SK-N-SH (cell line): ENCODE measurements at regions of chr15 and their contacts with region 1.

Region 1: DNA sequence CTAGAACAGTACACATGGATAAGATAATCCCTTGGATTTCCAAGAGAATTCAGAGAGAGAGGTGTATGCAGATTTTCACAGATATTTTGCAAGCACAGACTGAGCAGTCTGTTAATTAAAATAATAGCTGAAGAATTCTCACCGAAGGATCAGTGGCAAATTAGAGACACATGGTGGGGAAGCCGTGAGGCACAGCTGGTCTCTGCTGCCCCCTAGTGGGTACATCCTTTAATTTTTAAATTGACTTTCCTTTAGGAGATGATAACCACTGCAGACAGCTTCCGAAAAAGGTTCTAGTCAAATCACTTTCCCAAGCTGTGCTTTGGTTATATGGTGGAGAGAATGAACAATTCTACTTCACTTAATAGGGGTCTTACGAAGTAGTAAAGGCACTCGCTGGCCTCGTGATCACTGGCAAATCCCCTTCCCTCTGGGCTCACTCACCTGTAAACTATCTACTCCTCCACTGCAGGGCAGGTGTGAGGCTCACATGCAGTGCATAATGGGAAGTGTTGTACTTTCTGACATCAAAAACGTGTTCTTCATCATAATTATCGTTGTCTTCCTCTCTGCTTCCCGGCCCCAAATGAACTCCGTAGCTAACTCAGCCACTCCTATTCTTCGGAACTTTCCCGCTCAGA is 19.5 kb downstream of the MESD start:
- DNase-seq: peak; percentile 70
- H3K4me3 ChIP-seq: no peak overlapping the region; a peak in 1 of 4 replicates
- H3K27ac ChIP-seq: no peak overlapping the region
- H3K4me1 ChIP-seq: peaks cover 0 to 7% of the 10 kb centered on the region in 2 experiments; a peak in 1 of 4 replicates
- H3K27me3 ChIP-seq: no peaks in the 10 kb centered on the region
- CTCF ChIP-seq: peak; percentile 87
- EP300 ChIP-seq: no peak
- RAD21 ChIP-seq: peak; percentile 95

Region 2: GRCh38 chr15:80455668-80456442 is 514.3 kb before region 1 on chr15:
- CTCF ChIA-PET with region 1: interaction called, 45 read pairs
- POLR2A ChIA-PET with region 1: no interaction called
- DNase-seq: peak; percentile 75
- H3K4me3 ChIP-seq: peak overlapping the region in 1 of 2 experiments; percentile 20; a peak in 1 of 4 replicates
- H3K27ac ChIP-seq: peak overlapping the region; percentile 49 to 69; a peak in 3 of 4 replicates
- H3K4me1 ChIP-seq: peaks cover 13 to 16% of the 10 kb centered on the region in 2 experiments; a peak in 3 of 4 replicates
- H3K27me3 ChIP-seq: no peaks in the 10 kb centered on the region
- CTCF ChIP-seq: peak; percentile 98
- EP300 ChIP-seq: peak; percentile 66 to 94
- RAD21 ChIP-seq: peak; percentile 96

Region 3: GRCh38 chr15:80783260-80783659 is 186.9 kb before region 1 on chr15:
- CTCF ChIA-PET with region 1: interaction called, 139 read pairs
- POLR2A ChIA-PET with region 1: no interaction called
- DNase-seq: no peak
- H3K4me3 ChIP-seq: no peak overlapping the region
- H3K27ac ChIP-seq: no peak overlapping the region
- H3K4me1 ChIP-seq: peaks cover 0 to 19% of the 10 kb centered on the region in 2 experiments; a peak in 1 of 4 replicates
- H3K27me3 ChIP-seq: no peaks in the 10 kb centered on the region
- CTCF ChIP-seq: no peak
- EP300 ChIP-seq: no peak
- RAD21 ChIP-seq: no peak

Region 4: GRCh38 chr15:80789296-80789695 is 180.8 kb before region 1 on chr15:
- CTCF ChIA-PET with region 1: interaction called, 13 read pairs
- POLR2A ChIA-PET with region 1: no interaction called
- DNase-seq: no peak
- H3K4me3 ChIP-seq: no peak overlapping the region
- H3K27ac ChIP-seq: no peak overlapping the region
- H3K4me1 ChIP-seq: no peaks in the 10 kb centered on the region; a peak in 1 of 4 replicates
- H3K27me3 ChIP-seq: no peaks in the 10 kb centered on the region
- CTCF ChIP-seq: no peak
- EP300 ChIP-seq: no peak
- RAD21 ChIP-seq: no peak

Region 5: DNA sequence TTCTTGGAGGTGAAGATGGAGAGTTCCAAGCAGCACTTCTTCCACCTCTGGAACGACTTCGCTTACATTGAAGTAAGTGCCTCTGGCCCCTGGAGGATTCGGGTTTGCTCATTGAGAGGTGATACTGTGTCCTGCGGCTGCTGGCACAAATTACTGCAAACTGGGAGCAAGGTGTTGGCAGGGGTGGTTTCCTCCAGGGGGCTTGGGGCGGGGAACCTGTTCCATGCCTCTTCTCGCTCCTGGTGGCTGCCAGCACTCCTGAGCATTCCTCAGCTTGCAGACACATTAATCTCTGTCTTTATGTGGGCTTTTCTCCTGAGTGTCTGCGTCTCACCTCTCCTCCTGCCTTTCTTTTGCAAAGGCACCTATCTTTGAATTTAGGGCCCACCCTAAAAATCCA is 27.9 kb before region 1 on chr15:
- CTCF ChIA-PET with region 1: interaction called, 11 read pairs
- POLR2A ChIA-PET with region 1: no interaction called
- DNase-seq: no peak
- H3K4me3 ChIP-seq: no peak overlapping the region
- H3K27ac ChIP-seq: no peak overlapping the region
- H3K4me1 ChIP-seq: no peaks in the 10 kb centered on the region; a peak in 1 of 4 replicates
- H3K27me3 ChIP-seq: no peaks in the 10 kb centered on the region
- CTCF ChIP-seq: no peak
- EP300 ChIP-seq: no peak
- RAD21 ChIP-seq: no peak

Region 6: GRCh38 chr15:80953936-80954778 is 16.0 kb before region 1 on chr15:
- CTCF ChIA-PET with region 1: interaction called, 15 read pairs
- POLR2A ChIA-PET with region 1: no interaction called
- DNase-seq: no peak
- H3K4me3 ChIP-seq: no peak overlapping the region
- H3K27ac ChIP-seq: no peak overlapping the region
- H3K4me1 ChIP-seq: peaks cover 0 to 6% of the 10 kb centered on the region in 2 experiments; a peak in 2 of 4 replicates
- H3K27me3 ChIP-seq: no peaks in the 10 kb centered on the region
- CTCF ChIP-seq: no peak
- EP300 ChIP-seq: no peak
- RAD21 ChIP-seq: no peak

Region 7: GRCh38 chr15:80989518-80990478 is 19.7 kb after region 1 on chr15 and contains the start of gene MESD:
- CTCF ChIA-PET with region 1: interaction called, 52 read pairs
- POLR2A ChIA-PET with region 1: no interaction called
- DNase-seq: peak; percentile 99
- H3K4me3 ChIP-seq: peak within 1 kb of the TSS; percentile 61 to 96
- H3K27ac ChIP-seq: peak within 1 kb of the TSS; percentile 75 to 77
- H3K4me1 ChIP-seq: peaks cover 0 to 12% of the 10 kb centered on the region in 2 experiments; a peak in 2 of 4 replicates
- H3K27me3 ChIP-seq: no peaks in the 10 kb centered on the region
- CTCF ChIP-seq: no peak
- EP300 ChIP-seq: no peak
- RAD21 ChIP-seq: no peak
- polyA plus RNA-seq, gene MESD: 12.3 and 15.2 TPM in 2 replicates